ENCODE measurements at regions of chr20 and their contacts with region 1.

Region 1: GRCh38 chr20:43448748-43449535 is 8.8 kb upstream of the SRSF6 start:
- DNase-seq: no peak
- ATAC-seq: peak; percentile 37

Region 2: GRCh38 chr20:43691928-43692524 is 243.1 kb after region 1 on chr20:
- intact Hi-C with region 1: loop called (anchors 10 kb)
- DNase-seq: no peak
- ATAC-seq: no peak